Heart right ventricle (tissue), 16 donors: ENCODE measurements at regions of chr1 and their contacts with region 1.

Region 1: GRCh38 chr1:189524506-189524905 is 953.2 kb downstream of the BRINP3 start:
- DNase-seq: no peak
- ATAC-seq: no peak
- H3K4me3 ChIP-seq: no peak overlapping the region
- H3K27ac ChIP-seq: no peak overlapping the region
- H3K4me1 ChIP-seq: no peaks in the 10 kb centered on the region
- H3K27me3 ChIP-seq: no peaks in the 10 kb centered on the region
- CTCF ChIP-seq: no peak

Region 2: DNA sequence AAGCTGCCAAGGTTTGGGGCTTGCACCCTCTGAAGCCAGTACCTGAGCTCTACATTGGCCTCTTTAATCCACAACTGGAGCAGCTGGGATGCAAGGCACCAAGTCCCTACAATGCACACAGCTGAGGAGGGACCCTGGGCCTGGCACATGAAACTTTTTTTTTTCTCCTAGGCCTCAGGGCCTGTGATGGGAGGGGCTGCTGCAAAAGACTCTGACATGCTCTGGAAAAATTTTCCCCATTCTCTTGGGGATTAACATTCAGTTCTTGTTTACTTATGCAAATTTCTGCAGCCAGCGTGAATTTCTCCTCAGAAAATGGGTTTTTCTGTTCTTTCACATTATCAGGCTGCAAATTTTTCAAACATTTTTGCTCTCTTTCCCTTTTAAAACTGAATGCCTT is 119.1 kb before region 1 on chr1:
- intact Hi-C with region 1: loop called in 1 of 10 experiments (anchors 2 kb)
- DNase-seq: no peak
- ATAC-seq: no peak
- H3K4me3 ChIP-seq: no peak overlapping the region
- H3K27ac ChIP-seq: no peak overlapping the region
- H3K4me1 ChIP-seq: no peaks in the 10 kb centered on the region
- H3K27me3 ChIP-seq: no peaks in the 10 kb centered on the region
- CTCF ChIP-seq: no peak